ENCODE measurements at regions of chr11 and their contacts with region 1.

Region 1: GRCh38 chr11:131038597-131038996 is 122.3 kb upstream of the SNX19 start:
- DNase-seq: peak; percentile 32
- H3K4me3 ChIP-seq: no peak overlapping the region
- H3K27ac ChIP-seq: no peak overlapping the region
- H3K4me1 ChIP-seq: peaks cover 22% of the 10 kb centered on the region
- H3K27me3 ChIP-seq: no peaks in the 10 kb centered on the region
- CTCF ChIP-seq: peak; percentile 35 to 49

Region 2: DNA sequence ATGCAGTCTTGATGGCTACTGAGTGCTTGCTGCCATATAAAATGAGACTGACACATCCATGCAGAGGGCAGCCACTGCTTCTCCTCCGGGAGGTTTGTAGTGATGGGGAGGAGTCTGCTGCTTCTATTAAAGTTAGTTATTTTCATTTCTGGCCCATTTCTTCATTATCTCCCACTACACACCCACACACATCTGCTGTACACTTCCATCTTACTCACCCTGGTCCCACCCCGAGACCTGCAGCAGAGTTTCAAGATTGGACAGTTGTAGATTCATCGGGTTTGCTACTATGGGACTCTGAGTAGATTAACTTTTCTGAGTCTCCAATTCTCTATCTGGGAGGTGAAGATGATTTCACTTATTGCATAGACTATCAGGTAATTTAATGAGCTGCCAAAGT is 53.9 kb after region 1 on chr11:
- CTCF ChIA-PET with region 1: no interaction called
- dilution Hi-C with region 1: no loop called
- in situ Hi-C with region 1: no loop called
- intact Hi-C with region 1: no loop called
- DNase-seq: no peak
- H3K4me3 ChIP-seq: no peak overlapping the region
- H3K27ac ChIP-seq: no peak overlapping the region
- H3K4me1 ChIP-seq: no peaks in the 10 kb centered on the region
- H3K27me3 ChIP-seq: no peaks in the 10 kb centered on the region
- CTCF ChIP-seq: no peak

Region 3: DNA sequence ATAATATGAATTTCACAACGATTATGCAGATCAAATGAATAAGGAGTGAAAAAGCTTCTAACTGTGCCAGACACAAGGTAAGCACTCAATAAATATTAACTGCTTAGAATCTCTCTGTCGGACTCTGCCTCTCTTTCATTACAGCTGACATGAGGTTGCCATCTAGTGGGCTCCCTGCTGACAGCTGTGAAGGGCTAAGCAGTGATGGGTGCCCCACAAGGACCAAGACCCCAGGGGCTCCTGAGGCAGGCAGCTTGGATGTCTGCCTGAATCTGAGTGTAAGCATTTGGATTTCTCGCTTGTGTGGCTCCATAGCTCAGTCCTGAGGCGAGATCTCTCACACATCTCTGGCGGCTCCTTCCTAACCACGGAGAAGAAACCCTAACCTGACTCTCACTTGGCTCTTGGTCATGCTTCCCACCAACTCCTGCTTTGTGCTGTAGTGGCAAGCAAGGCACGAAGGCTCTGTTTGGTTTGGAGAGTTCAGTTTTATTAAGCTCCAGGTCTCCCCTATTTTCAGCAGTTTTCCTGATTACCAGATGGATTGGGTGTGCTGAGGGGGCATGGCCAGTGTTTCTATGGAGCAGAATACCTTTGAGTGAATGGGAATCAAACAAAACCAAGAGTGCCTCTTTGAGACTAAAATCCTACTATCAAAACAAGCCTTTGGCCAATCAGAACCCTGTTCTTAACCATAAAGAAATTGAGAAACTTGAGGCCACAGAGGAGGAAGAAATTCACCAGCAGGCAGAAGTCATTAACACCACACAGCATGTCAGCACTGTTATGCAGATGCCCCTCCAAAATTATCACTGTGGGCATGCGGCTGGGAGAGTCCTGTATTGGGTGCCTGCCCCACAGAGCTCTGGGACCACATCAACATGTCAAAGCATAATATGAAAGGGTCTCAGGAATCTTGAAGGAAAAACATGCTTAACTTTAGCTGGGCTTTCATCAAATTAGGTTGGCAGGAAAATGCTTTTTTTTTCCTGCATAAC is 179.0 kb after region 1 on chr11:
- CTCF ChIA-PET with region 1: no interaction called
- dilution Hi-C with region 1: no loop called
- in situ Hi-C with region 1: no loop called
- intact Hi-C with region 1: loop called (anchors 10 kb)
- DNase-seq: no peak
- H3K4me3 ChIP-seq: no peak overlapping the region
- H3K27ac ChIP-seq: no peak overlapping the region
- H3K4me1 ChIP-seq: no peaks in the 10 kb centered on the region
- H3K27me3 ChIP-seq: no peaks in the 10 kb centered on the region
- CTCF ChIP-seq: peak; percentile 12 to 52